Caco-2 (cell line): ENCODE measurements at regions of chr3 and their contacts with region 1.

Region 1: GRCh38 chr3:33318709-33319380 is 41.6 kb downstream of the FBXL2 start:
- DNase-seq: peak in 1 of 2 experiments; percentile 51
- H3K4me3 ChIP-seq: no peak overlapping the region
- H3K4me3 Mint-ChIP-seq: peak overlapping the region; percentile 65
- H3K27ac Mint-ChIP-seq: peak overlapping the region; percentile 80
- H3K4me1 ChIP-seq: peaks cover 34% of the 10 kb centered on the region
- H3K4me1 Mint-ChIP-seq: peaks cover 34% of the 10 kb centered on the region
- H3K27me3 ChIP-seq: no peaks in the 10 kb centered on the region
- H3K27me3 Mint-ChIP-seq: no peaks in the 10 kb centered on the region
- CTCF ChIP-seq: peak in 1 of 2 experiments; percentile 47

Region 2: DNA sequence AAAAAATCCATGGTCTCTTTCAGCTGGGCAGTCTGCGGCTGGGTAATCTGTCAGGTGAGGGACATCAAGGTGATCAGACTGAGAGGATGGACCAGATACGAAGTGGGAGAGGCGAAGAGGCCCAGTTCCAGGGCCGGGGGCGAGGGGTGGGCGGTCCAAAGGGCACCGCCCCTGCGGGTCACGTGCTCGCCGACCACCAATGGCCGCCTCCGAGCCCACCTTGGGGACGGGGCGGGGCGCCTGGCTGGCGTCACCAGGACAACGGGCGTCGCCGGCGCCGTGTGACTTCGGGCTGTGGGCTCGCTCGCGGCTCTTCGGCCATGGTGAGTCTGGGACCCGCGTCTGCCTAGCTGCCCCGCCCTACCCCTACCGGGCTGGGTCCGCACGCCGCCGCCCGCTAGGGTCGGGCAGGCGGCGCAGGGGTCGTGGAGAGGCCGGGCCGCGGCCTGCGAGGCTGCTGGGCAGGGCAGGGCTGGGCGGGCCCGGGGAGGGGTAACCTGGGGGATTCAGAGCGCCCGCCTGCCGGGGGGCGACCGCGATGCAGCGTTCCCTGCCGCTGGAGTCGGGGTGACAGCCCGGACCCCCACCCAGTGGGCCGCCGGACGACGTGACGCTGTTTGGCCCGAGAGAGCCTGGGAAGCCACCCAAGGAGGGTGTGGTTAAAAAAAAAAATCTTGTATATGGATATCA is 41.5 kb before region 1 on chr3 and contains the start of gene FBXL2:
- CTCF ChIA-PET with region 1: no interaction called
- POLR2A ChIA-PET with region 1: no interaction called
- intact Hi-C with region 1: loop called (anchors 2 kb)
- DNase-seq: peak; percentile 91 to 96
- H3K4me3 ChIP-seq: peak within 1 kb of the TSS; percentile 86
- H3K4me3 Mint-ChIP-seq: peak within 1 kb of the TSS; percentile 71
- H3K27ac Mint-ChIP-seq: peak within 1 kb of the TSS; percentile 9
- H3K4me1 ChIP-seq: no peaks in the 10 kb centered on the region
- H3K4me1 Mint-ChIP-seq: no peaks in the 10 kb centered on the region
- H3K27me3 ChIP-seq: no peaks in the 10 kb centered on the region
- H3K27me3 Mint-ChIP-seq: no peaks in the 10 kb centered on the region
- CTCF ChIP-seq: no peak
- total RNA-seq, gene FBXL2: 8.5 and 10.8 TPM in 2 replicates

Region 3: GRCh38 chr3:33331414-33331813 is 12.6 kb after region 1 on chr3:
- CTCF ChIA-PET with region 1: no interaction called
- POLR2A ChIA-PET with region 1: no interaction called
- intact Hi-C with region 1: loop called (anchors 1 kb)
- DNase-seq: no peak
- H3K4me3 ChIP-seq: no peak overlapping the region
- H3K4me3 Mint-ChIP-seq: no peak overlapping the region
- H3K27ac Mint-ChIP-seq: no peak overlapping the region
- H3K4me1 ChIP-seq: no peaks in the 10 kb centered on the region
- H3K4me1 Mint-ChIP-seq: no peaks in the 10 kb centered on the region
- H3K27me3 ChIP-seq: no peaks in the 10 kb centered on the region
- H3K27me3 Mint-ChIP-seq: no peaks in the 10 kb centered on the region
- CTCF ChIP-seq: no peak

Region 4: GRCh38 chr3:33355611-33356010 is 36.8 kb after region 1 on chr3:
- CTCF ChIA-PET with region 1: interaction called, 3 read pairs
- POLR2A ChIA-PET with region 1: no interaction called
- intact Hi-C with region 1: loop called (anchors 1 kb)
- DNase-seq: peak; percentile 59 to 71
- H3K4me3 ChIP-seq: no peak overlapping the region
- H3K4me3 Mint-ChIP-seq: peak overlapping the region; percentile 60
- H3K27ac Mint-ChIP-seq: peak overlapping the region; percentile 27
- H3K4me1 ChIP-seq: peaks cover 17% of the 10 kb centered on the region
- H3K4me1 Mint-ChIP-seq: peaks cover 6% of the 10 kb centered on the region
- H3K27me3 ChIP-seq: no peaks in the 10 kb centered on the region
- H3K27me3 Mint-ChIP-seq: no peaks in the 10 kb centered on the region
- CTCF ChIP-seq: no peak

Region 5: GRCh38 chr3:33417066-33417673 is 98.3 kb after region 1 on chr3:
- CTCF ChIA-PET with region 1: no interaction called
- POLR2A ChIA-PET with region 1: no interaction called
- intact Hi-C with region 1: no loop called
- DNase-seq: no peak
- H3K4me3 ChIP-seq: no peak overlapping the region
- H3K4me3 Mint-ChIP-seq: no peak overlapping the region
- H3K27ac Mint-ChIP-seq: no peak overlapping the region
- H3K4me1 ChIP-seq: no peaks in the 10 kb centered on the region
- H3K4me1 Mint-ChIP-seq: no peaks in the 10 kb centered on the region
- H3K27me3 ChIP-seq: no peaks in the 10 kb centered on the region
- H3K27me3 Mint-ChIP-seq: no peaks in the 10 kb centered on the region
- CTCF ChIP-seq: no peak

Region 6: DNA sequence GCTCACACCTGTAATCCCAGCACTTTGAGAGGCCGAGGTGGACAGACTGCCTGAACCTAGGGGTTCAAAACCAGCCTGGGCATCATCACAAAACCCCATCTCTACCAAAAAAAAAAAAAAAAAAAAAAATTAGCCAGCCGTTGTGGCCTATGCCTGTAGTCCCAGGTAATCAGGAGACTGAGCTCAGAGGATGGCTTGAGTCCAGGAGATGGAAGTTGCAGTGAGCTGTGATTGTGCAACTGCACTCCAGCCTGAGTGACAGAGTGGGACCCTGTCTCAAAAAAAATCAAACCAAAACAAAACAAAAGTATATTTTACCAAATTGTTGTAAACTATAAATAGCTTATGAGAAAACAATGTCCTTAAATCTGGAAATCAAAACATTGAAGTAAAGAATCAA is 156.1 kb after region 1 on chr3:
- CTCF ChIA-PET with region 1: no interaction called
- POLR2A ChIA-PET with region 1: no interaction called
- intact Hi-C with region 1: no loop called
- DNase-seq: no peak
- H3K4me3 ChIP-seq: no peak overlapping the region
- H3K4me3 Mint-ChIP-seq: no peak overlapping the region
- H3K27ac Mint-ChIP-seq: no peak overlapping the region
- H3K4me1 ChIP-seq: no peaks in the 10 kb centered on the region
- H3K4me1 Mint-ChIP-seq: no peaks in the 10 kb centered on the region
- H3K27me3 ChIP-seq: no peaks in the 10 kb centered on the region
- H3K27me3 Mint-ChIP-seq: no peaks in the 10 kb centered on the region
- CTCF ChIP-seq: no peak

Region 7: GRCh38 chr3:33717866-33718594 is 399.2 kb after region 1 on chr3 and contains the start of gene CLASP2:
- CTCF ChIA-PET with region 1: no interaction called
- POLR2A ChIA-PET with region 1: no interaction called
- intact Hi-C with region 1: loop called (anchors 10 kb)
- DNase-seq: peak; percentile 89
- H3K4me3 ChIP-seq: peak within 1 kb of the TSS; percentile 90
- H3K4me3 Mint-ChIP-seq: no peak within 1 kb of the TSS
- H3K27ac Mint-ChIP-seq: no peak within 1 kb of the TSS
- H3K4me1 ChIP-seq: peaks cover 11% of the 10 kb centered on the region; the same call in 1 of the 2 replicates
- H3K4me1 Mint-ChIP-seq: no peaks in the 10 kb centered on the region
- H3K27me3 ChIP-seq: no peaks in the 10 kb centered on the region
- H3K27me3 Mint-ChIP-seq: no peaks in the 10 kb centered on the region
- CTCF ChIP-seq: no peak
- total RNA-seq, gene CLASP2: 65.6 and 66.3 TPM in 2 replicates